A549 (cell line): ENCODE measurements at regions of chr19 and their contacts with region 1.

Region 1: DNA sequence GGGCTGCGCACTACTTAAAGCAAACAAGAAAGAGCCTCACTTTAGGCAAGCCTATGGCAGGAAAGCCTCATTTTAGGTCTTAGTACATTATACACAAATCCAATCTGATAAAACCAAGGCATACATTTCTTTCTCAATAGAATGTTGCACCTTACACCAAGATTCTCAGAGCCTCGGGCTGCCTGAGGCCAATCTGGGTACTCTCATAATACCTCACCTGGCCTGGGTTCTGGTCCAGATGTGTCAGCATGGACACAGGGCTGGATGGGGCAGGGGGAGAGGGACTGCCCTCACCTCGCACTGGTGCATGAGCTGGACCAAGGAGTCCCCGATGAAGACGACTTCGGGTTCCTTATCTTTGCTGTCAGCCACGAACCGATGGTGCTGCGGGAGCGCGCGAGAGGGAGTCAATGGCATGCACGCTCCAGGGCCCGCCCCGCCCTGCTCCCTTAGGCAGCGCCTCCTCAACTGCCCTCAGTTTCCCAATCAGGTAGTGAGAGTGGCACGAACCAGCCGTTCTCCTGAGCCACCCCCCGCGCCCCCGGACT is at the start of gene PRR19:
- DNase-seq: no peak
- ATAC-seq: peak; percentile 37 to 63
- H3K4me3 ChIP-seq: peak within 1 kb of the TSS; percentile 65
- H3K27ac ChIP-seq: peak within 1 kb of the TSS; percentile 74 to 85
- H3K4me1 ChIP-seq: peaks cover 19% of the 10 kb centered on the region
- CTCF ChIP-seq: no peak
- EP300 ChIP-seq: no peak
- POLR2A ChIP-seq: no peak
- RAD21 ChIP-seq: no peak
- polyA plus RNA-seq, gene PRR19: 1.1 and 1.3 TPM in 2 replicates

Region 2: DNA sequence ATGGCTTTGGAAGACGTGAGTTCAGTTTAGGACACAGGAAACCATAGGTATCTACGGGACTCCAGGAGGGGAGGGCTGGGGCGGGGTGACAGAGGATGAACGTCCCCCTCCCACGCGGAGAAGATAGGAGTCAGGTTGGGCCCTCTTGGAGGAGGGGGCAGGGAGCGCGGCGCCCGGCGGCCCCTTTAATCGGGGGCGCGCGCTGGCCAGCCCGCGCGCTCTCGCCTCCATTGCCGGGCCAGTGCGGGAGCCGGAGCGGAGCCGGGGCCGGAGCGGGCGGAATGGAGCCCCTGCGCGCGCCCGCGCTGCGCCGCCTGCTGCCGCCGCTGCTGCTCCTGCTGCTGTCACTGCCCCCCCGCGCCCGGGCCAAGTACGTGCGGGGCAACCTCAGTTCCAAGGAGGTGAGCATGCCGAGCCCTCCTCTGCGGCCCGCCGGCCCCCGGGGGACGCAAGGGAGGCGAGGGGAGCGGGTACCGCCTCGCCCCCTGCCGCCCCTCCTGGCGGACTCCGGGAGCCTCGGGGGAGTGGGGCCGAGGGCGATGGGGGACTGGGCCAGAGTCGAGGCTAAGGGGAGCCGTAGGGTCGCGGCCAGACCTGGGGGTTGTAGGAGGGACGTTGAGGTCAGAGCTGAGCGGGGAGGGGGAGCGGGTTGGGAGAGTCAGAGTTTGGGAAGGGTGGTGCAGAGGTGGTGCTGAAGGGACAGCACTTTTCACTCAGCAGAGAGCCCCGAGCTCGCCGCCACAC is 11.5 kb after region 1 on chr19 and contains the start of gene TMEM145:
- CTCF ChIA-PET with region 1: interaction called, 58 read pairs
- POLR2A ChIA-PET with region 1: no interaction called
- DNase-seq: peak; percentile 67 to 92
- ATAC-seq: peak; percentile 67 to 82
- H3K4me3 ChIP-seq: peak within 1 kb of the TSS; percentile 51
- H3K27ac ChIP-seq: peak within 1 kb of the TSS; percentile 32 to 79; a peak in 5 of 6 replicates
- H3K4me1 ChIP-seq: peaks cover 5% of the 10 kb centered on the region; the same call in 1 of the 3 replicates
- CTCF ChIP-seq: peak; percentile 36
- EP300 ChIP-seq: no peak
- POLR2A ChIP-seq: no peak
- RAD21 ChIP-seq: no peak; a peak in 1 of 5 replicates
- polyA plus RNA-seq, gene TMEM145: 0.71 and 1.8 TPM in 2 replicates